Panc1 (cell line): ENCODE measurements at regions of chr12 and their contacts with region 1.

Region 1: DNA sequence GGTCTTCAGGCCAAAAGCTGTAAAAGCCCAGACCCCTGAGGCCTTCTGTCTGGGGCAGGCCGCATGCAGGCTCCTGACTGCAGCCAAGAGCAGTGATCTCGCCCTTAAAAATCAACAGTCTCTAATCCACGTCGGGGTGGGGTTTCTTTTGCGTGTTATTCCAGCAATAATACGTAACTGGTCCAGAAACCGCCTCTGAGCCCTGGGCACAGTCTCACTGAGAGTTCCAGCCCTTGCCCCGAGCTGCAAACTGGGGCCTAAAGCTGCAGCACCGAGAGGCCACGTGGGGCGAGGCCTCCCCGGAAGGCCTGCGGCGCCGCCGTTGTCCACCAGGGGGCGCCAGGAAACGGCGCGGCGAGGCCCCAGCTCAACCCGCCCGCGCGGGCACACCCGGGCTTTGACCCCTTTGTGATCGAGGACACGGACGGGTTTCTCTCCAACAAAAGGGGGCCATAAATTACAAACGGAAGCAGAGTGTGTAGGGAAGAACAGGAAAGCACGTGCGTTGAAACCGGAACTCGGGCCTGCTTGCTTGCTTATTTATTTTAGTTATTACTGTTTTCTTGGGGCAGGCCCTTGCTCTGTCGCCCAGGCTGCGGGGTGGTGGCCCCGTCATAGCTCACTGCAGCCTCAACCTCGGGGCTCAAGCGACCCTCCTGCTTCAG is 87.2 kb downstream of the NINJ2 start:
- DNase-seq: peak; percentile 24
- ATAC-seq: peak; percentile 52
- H3K4me3 ChIP-seq: no peak overlapping the region
- H3K27ac ChIP-seq: peak overlapping the region; percentile 85
- H3K4me1 ChIP-seq: peaks cover 56% of the 10 kb centered on the region
- H3K27me3 ChIP-seq: no peaks in the 10 kb centered on the region
- CTCF ChIP-seq: peak; percentile 95

Region 2: GRCh38 chr12:496736-497135 is 79.3 kb before region 1 on chr12:
- CTCF ChIA-PET with region 1: no interaction called
- POLR2A ChIA-PET with region 1: interaction called, 10 read pairs
- in situ Hi-C with region 1: no loop called
- intact Hi-C with region 1: no loop called
- DNase-seq: no peak
- ATAC-seq: no peak
- H3K4me3 ChIP-seq: no peak overlapping the region
- H3K27ac ChIP-seq: no peak overlapping the region
- H3K4me1 ChIP-seq: no peaks in the 10 kb centered on the region; the same call in 1 of the 2 replicates
- H3K27me3 ChIP-seq: no peaks in the 10 kb centered on the region; the same call in 1 of the 2 replicates
- CTCF ChIP-seq: no peak

Region 3: DNA sequence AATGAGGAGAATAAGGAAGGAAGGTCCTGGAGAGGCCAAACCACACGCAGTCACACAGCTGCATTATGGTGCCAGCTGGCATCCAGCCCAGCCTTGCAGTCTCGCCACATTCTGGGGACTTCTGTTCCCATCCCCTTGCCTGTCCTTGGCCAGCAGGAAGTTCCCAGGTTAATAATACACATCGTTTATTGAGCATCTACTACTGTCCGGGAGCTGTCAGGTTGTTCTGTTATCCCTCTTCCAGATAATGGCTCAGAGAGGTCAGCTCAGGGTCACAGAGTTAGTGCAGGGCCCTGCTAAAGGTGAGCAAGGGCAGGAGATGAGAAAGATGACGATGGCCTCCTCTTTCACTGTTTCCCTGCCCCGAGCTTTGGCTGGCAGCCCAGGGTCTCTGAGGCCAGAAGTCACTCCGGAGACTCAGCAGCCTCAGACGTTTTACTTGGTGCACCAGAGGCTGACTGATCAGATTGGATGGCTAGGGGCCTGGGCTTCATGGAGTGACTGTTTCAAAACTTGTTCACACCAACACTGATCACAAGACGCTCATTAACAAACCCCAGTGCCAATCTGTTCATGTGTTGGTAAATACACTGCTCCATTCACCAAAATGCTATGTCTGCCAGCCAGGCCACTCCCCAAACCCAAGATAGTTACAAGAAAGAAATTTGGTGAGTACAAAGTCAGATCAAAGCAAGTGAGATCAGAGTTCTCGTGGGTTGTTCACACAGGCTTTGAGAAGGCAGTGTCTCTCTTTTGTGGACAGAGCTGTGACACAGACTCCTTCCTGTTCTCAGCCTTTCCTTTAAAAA is 37.1 kb before region 1 on chr12:
- CTCF ChIA-PET with region 1: no interaction called
- POLR2A ChIA-PET with region 1: no interaction called
- in situ Hi-C with region 1: no loop called
- intact Hi-C with region 1: no loop called
- DNase-seq: no peak
- ATAC-seq: 0 out of 2 replicates have a peak, but pooled peaks have one; percentile 36
- H3K4me3 ChIP-seq: no peak overlapping the region
- H3K27ac ChIP-seq: no peak overlapping the region
- H3K4me1 ChIP-seq: no peaks in the 10 kb centered on the region; the same call in 1 of the 2 replicates
- H3K27me3 ChIP-seq: no peaks in the 10 kb centered on the region
- CTCF ChIP-seq: no peak

Region 4: DNA sequence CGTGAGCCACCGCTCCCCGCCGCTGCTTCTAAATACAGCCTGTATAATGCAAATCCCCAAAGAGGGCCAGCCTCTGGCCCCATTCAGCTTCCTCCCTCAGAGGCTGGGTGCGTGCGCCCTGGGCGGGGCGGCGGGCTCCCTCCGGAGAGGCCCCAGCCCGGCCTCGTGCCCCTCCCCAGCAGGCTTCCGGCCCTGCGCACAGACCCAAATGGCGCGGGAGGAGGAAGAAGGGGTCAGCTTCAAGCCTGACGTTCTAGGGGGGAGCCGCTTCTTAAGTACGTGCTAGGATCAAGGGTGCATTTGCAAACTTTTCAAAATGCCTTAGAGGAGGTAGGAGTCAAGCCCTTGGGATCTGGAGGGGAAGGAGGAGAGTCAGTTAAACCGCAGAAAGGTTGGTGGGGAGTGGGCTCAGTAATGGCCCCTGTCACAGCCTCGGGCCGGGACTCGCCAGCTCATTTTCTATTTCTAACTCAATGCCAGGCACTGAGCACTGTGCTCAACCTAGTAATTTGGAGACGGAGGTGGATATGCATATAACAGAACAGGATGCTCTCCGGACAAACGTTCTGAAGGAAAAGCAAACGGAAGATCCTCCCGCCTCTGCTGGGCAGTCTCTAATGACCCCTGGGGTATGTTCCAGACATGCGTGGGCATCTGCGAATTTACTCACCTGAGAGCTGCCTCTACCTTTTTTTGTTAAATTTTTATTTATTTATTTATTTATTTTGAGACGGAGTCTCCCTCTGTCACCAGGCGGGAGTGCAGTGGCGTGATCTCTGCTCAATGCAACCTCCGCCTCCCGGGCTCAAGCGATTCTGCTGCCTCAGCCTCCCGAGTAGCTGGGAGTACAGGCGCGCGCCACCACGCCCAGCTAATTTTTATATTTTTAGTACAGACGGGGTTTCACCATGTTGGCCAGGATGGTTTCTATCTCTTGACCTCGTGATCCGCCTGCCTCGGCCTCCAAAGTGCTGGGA is 54.9 kb after region 1 on chr12:
- CTCF ChIA-PET with region 1: no interaction called
- POLR2A ChIA-PET with region 1: no interaction called
- in situ Hi-C with region 1: no loop called
- intact Hi-C with region 1: loop called (anchors 10 kb)
- DNase-seq: no peak
- ATAC-seq: no peak
- H3K4me3 ChIP-seq: no peak overlapping the region
- H3K27ac ChIP-seq: peak overlapping the region; percentile 91
- H3K4me1 ChIP-seq: peaks cover 41% of the 10 kb centered on the region
- H3K27me3 ChIP-seq: no peaks in the 10 kb centered on the region
- CTCF ChIP-seq: no peak

Region 5: GRCh38 chr12:659090-659705 is 83.1 kb after region 1 on chr12:
- CTCF ChIA-PET with region 1: no interaction called
- POLR2A ChIA-PET with region 1: no interaction called
- in situ Hi-C with region 1: no loop called
- intact Hi-C with region 1: no loop called
- DNase-seq: no peak
- ATAC-seq: no peak
- H3K4me3 ChIP-seq: no peak overlapping the region
- H3K27ac ChIP-seq: no peak overlapping the region
- H3K4me1 ChIP-seq: peaks cover 9% of the 10 kb centered on the region
- H3K27me3 ChIP-seq: no peaks in the 10 kb centered on the region
- CTCF ChIP-seq: no peak

Region 6: DNA sequence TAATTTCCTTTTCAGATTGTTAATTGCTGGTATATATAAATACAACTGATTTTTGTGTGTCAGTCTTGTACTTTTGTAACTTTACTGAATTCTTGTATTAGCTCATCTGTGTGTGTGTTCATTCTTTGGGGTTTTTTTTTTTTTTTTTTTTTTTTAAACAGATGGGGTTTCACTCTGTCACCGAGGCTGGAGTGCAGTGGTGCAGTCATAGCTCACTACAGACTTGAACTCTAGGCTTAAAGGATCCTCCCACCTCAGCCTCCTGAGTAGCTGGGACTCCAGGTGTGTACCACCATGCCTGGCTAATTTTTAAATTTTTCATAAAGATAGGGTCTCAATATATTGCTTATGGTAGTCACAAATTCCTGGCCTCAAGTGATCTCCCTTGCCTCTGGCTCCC is 244.3 kb after region 1 on chr12:
- CTCF ChIA-PET with region 1: no interaction called
- POLR2A ChIA-PET with region 1: interaction called, 18 read pairs
- in situ Hi-C with region 1: no loop called
- intact Hi-C with region 1: no loop called
- DNase-seq: no peak
- ATAC-seq: no peak
- H3K4me3 ChIP-seq: no peak overlapping the region
- H3K27ac ChIP-seq: no peak overlapping the region
- H3K4me1 ChIP-seq: no peaks in the 10 kb centered on the region
- H3K27me3 ChIP-seq: no peaks in the 10 kb centered on the region
- CTCF ChIP-seq: no peak

Region 7: GRCh38 chr12:913919-914708 is 338.0 kb after region 1 on chr12:
- CTCF ChIA-PET with region 1: interaction called, 10 read pairs
- POLR2A ChIA-PET with region 1: no interaction called
- in situ Hi-C with region 1: no loop called
- intact Hi-C with region 1: no loop called
- DNase-seq: no peak
- ATAC-seq: peak; percentile 72
- H3K4me3 ChIP-seq: no peak overlapping the region
- H3K27ac ChIP-seq: no peak overlapping the region
- H3K4me1 ChIP-seq: no peaks in the 10 kb centered on the region; the same call in 1 of the 2 replicates
- H3K27me3 ChIP-seq: no peaks in the 10 kb centered on the region
- CTCF ChIP-seq: no peak